Activated CD8-positive, alpha-beta T cell treated with anti-CD3 and anti-CD28 coated beads, Interleukin-2, amount 10 ng/mL, durations not matched to agents 7 days and 5 days (primary cell): ENCODE measurements at regions of chr6 and their contacts with region 1.

Region 1: DNA sequence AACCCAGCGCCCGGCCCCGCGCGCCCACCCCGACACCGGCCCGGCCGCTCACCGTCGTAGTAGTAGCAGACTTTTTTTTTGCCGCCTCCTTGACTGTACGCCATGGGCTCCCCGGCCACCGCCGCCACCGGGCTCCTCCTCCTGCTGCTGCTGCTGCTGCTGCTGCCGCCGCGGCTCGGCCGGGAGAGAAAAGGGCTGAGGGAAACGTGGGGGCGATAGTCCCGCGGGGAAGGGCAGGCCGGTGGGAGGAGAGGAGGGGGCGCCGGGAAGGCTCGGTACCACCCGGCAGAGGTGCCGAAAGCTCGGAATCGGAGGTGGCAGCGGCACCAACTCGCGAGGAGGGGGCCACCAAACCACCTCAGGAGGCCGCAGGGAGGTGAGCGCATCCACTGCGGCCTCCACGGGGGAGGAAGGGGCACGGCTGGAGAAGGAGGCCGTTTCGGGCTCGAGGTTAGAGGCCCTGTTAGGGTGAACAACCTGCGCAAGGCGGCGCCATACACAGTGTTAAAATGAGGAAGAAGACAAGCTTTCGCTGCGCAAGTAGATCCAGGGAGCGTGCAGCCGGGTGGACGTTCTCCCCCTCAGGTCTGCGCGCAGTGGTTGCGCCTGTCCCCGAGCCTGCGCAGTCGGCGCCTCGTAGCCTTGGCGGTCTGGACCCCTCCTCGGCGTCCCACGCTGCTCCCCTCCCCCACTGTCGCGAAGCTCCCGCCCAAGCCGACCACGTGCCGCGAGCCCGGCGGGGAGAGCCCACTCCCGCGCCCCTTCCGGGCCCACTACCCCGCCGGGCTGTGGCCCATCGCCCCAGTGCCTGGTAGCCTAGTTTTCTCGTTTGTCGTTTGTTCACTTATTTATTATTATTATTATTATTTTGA is at the start of gene HDAC2:
- DNase-seq: peak; percentile 87
- ATAC-seq: peak; percentile 81
- H3K4me3 Mint-ChIP-seq: peak within 1 kb of the TSS; percentile 90
- H3K27ac Mint-ChIP-seq: peak within 1 kb of the TSS; percentile 98
- H3K4me1 Mint-ChIP-seq: peaks cover 25% of the 10 kb centered on the region
- H3K27me3 Mint-ChIP-seq: no peaks in the 10 kb centered on the region
- total RNA-seq, gene HDAC2: 66.8 to 75.7 TPM

Region 2: GRCh38 chr6:113980937-113981554 is 10.0 kb after region 1 on chr6:
- CTCF ChIA-PET with region 1: interaction called, 11 read pairs
- POLR2A ChIA-PET with region 1: interaction called, 3 read pairs
- DNase-seq: no peak
- ATAC-seq: peak; percentile 67
- H3K4me3 Mint-ChIP-seq: no peak overlapping the region
- H3K27ac Mint-ChIP-seq: no peak overlapping the region
- H3K4me1 Mint-ChIP-seq: no peaks in the 10 kb centered on the region
- H3K27me3 Mint-ChIP-seq: no peaks in the 10 kb centered on the region